Activated CD4-positive, alpha-beta memory T cell treated with anti-CD3 and anti-CD28 coated beads for 36 hours (primary cell): ENCODE measurements at regions of chr9 and their contacts with region 1.

Region 1: GRCh38 chr9:130770679-130771442 is 64.2 kb upstream of the ABL1 start:
- DNase-seq: no peak
- H3K4me3 Mint-ChIP-seq: no peak overlapping the region
- H3K27ac Mint-ChIP-seq: no peak overlapping the region
- H3K4me1 Mint-ChIP-seq: peaks cover 19% of the 10 kb centered on the region
- H3K27me3 Mint-ChIP-seq: no peaks in the 10 kb centered on the region

Region 2: GRCh38 chr9:130940693-130941576 is 170.1 kb after region 1 on chr9:
- CTCF ChIA-PET with region 1: no interaction called
- POLR2A ChIA-PET with region 1: no interaction called
- intact Hi-C with region 1: loop called (anchors 10 kb)
- DNase-seq: peak; percentile 85
- H3K4me3 Mint-ChIP-seq: no peak overlapping the region
- H3K27ac Mint-ChIP-seq: no peak overlapping the region
- H3K4me1 Mint-ChIP-seq: peaks cover 8% of the 10 kb centered on the region
- H3K27me3 Mint-ChIP-seq: peaks cover 45% of the 10 kb centered on the region